ENCODE measurements at regions of chr11 and their contacts with region 1.

Region 1: GRCh38 chr11:3807909-3808860 is at the start of gene PGAP2:
- DNase-seq: peak; percentile 59 to 77
- ATAC-seq: peak; percentile 77 to 81 (median 78)
- H3K4me3 ChIP-seq: peak within 1 kb of the TSS; percentile 78
- H3K4me3 Mint-ChIP-seq: peak within 1 kb of the TSS; percentile 97
- H3K27ac ChIP-seq: peak within 1 kb of the TSS; percentile 49
- H3K27ac Mint-ChIP-seq: peak within 1 kb of the TSS; percentile 76 to 90
- H3K4me1 ChIP-seq: peaks cover 14% of the 10 kb centered on the region
- H3K4me1 Mint-ChIP-seq: peaks cover 6 to 16% of the 10 kb centered on the region in 2 donors
- H3K27me3 ChIP-seq: no peaks in the 10 kb centered on the region
- H3K27me3 Mint-ChIP-seq: no peaks in the 10 kb centered on the region
- CTCF ChIP-seq: peak; percentile 59
- total RNA-seq, gene PGAP2: 9.5 to 17.5 (median 9.8) TPM

Region 2: DNA sequence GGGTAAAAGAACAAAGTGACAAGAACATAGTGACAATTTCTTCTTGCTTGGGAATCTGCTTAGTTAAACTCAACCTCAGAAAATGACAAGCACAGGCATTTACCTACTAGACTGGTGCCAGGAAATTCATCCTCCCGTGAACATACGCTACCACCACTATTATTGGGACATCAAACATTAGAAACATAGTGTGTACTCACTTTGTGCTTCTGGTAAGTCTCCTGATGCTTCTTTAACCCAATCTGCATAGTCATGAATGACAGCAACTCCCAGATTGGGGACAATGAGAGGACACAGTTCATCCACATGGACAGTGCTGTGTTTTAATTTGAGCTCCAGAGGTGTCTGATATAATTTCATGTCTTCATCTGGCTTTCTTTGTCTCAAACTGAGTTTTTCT is 107.8 kb before region 1 on chr11:
- intact Hi-C with region 1: no loop called
- DNase-seq: no peak
- ATAC-seq: no peak
- H3K4me3 ChIP-seq: no peak overlapping the region
- H3K4me3 Mint-ChIP-seq: no peak overlapping the region
- H3K27ac ChIP-seq: no peak overlapping the region
- H3K27ac Mint-ChIP-seq: no peak overlapping the region
- H3K4me1 ChIP-seq: no peaks in the 10 kb centered on the region
- H3K4me1 Mint-ChIP-seq: no peaks in the 10 kb centered on the region
- H3K27me3 ChIP-seq: no peaks in the 10 kb centered on the region
- H3K27me3 Mint-ChIP-seq: no peaks in the 10 kb centered on the region
- CTCF ChIP-seq: no peak

Region 3: DNA sequence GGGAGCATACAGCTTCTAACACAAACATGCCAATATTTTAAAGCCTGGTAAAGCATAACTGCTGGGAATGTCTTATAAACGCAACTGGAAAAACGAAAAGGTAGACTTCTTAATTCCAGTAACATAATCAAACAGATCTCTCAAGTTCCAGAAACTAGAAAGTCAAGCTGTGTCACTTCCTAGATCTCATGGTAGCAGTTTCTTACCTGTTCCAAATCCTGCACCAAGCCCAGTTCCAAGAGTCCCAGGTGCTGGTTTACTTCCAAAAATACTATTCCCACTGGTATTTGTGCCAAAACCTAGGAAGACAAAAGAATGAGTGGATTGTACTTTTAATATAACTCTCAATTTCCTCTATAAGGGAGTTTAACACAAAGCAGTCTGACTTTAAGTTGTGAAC is 55.1 kb before region 1 on chr11:
- intact Hi-C with region 1: loop called (anchors 10 kb)
- DNase-seq: no peak
- ATAC-seq: no peak
- H3K4me3 ChIP-seq: no peak overlapping the region
- H3K4me3 Mint-ChIP-seq: no peak overlapping the region
- H3K27ac ChIP-seq: no peak overlapping the region
- H3K27ac Mint-ChIP-seq: no peak overlapping the region
- H3K4me1 ChIP-seq: no peaks in the 10 kb centered on the region
- H3K4me1 Mint-ChIP-seq: no peaks in the 10 kb centered on the region
- H3K27me3 ChIP-seq: no peaks in the 10 kb centered on the region
- H3K27me3 Mint-ChIP-seq: no peaks in the 10 kb centered on the region
- CTCF ChIP-seq: no peak

Region 4: DNA sequence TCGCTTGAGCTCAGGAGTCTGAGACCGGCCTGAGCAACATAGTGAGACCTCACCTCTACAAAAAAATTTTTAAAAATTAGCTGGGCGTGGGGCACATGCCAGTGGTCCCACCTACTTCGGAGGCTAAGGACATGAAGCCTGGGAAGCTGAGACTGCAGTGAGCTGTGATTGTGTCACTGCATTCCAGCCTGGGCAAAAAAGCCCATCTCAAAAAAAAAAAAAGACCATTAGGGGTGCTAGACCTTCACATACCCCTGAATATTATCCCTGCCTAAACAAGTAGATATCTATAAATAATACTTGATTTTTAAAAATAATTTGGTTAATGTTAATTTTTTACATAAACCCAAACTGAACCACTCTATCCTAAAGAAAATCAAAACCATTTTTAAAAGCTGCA is 35.0 kb before region 1 on chr11:
- intact Hi-C with region 1: loop called (anchors 5 kb)
- DNase-seq: no peak
- ATAC-seq: no peak
- H3K4me3 ChIP-seq: no peak overlapping the region
- H3K4me3 Mint-ChIP-seq: no peak overlapping the region
- H3K27ac ChIP-seq: no peak overlapping the region
- H3K27ac Mint-ChIP-seq: no peak overlapping the region
- H3K4me1 ChIP-seq: no peaks in the 10 kb centered on the region
- H3K4me1 Mint-ChIP-seq: no peaks in the 10 kb centered on the region
- H3K27me3 ChIP-seq: no peaks in the 10 kb centered on the region
- H3K27me3 Mint-ChIP-seq: no peaks in the 10 kb centered on the region
- CTCF ChIP-seq: no peak

Region 5: DNA sequence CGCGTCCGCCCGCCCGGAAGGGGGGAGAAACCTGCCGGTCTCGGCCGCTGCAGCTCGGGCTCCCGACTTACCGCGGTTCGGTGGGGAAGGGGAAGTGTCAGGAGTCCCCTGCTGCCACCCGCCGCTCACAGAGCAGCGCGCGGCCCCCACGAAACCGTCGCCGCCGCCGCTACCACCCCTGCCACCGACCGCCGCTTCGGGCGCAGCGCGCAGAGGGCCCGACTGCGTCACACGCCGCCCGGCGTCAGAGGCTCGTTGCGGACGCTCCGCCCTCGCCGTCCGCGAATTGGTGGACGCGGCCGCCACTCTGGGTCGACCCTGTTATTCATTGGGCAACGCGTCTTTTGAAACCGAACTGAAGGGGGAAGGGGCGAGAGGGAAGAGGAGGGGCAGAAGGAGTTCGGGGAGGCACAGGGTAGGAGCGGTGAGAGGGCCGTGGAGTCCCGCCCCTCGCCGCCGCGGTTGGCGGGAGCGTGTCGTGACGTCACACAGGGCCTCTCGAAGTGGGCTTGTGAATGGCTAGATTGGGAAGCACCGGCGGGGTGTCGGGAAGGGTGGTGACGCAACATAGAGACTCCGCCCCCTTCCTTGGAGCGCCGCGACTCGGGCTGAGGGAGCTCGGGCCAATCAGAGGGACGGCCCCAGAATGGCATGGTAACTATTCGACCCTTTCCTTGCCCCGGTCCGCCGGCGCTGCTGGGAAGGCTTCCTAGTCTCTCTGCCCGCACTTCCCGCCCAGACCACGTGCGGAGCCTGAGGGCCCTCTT is 10.7 kb before region 1 on chr11 and contains the start of gene NUP98:
- intact Hi-C with region 1: loop called (anchors 1 kb)
- DNase-seq: peak; percentile 100
- ATAC-seq: peak; percentile 89 to 98 (median 91)
- H3K4me3 ChIP-seq: peak within 1 kb of the TSS; percentile 97
- H3K4me3 Mint-ChIP-seq: peak within 1 kb of the TSS; percentile 96
- H3K27ac ChIP-seq: peak within 1 kb of the TSS; percentile 99
- H3K27ac Mint-ChIP-seq: peak within 1 kb of the TSS; percentile 97 to 99
- H3K4me1 ChIP-seq: peaks cover 22% of the 10 kb centered on the region
- H3K4me1 Mint-ChIP-seq: peaks cover 34 to 37% of the 10 kb centered on the region in 2 donors
- H3K27me3 ChIP-seq: no peaks in the 10 kb centered on the region
- H3K27me3 Mint-ChIP-seq: no peaks in the 10 kb centered on the region
- CTCF ChIP-seq: no peak
- total RNA-seq, gene NUP98: 88.5 to 103 (median 92.8) TPM

Measured in natural killer cell (primary cell).